ENCODE measurements at regions of chr7 and their contacts with region 1.

Region 1: DNA sequence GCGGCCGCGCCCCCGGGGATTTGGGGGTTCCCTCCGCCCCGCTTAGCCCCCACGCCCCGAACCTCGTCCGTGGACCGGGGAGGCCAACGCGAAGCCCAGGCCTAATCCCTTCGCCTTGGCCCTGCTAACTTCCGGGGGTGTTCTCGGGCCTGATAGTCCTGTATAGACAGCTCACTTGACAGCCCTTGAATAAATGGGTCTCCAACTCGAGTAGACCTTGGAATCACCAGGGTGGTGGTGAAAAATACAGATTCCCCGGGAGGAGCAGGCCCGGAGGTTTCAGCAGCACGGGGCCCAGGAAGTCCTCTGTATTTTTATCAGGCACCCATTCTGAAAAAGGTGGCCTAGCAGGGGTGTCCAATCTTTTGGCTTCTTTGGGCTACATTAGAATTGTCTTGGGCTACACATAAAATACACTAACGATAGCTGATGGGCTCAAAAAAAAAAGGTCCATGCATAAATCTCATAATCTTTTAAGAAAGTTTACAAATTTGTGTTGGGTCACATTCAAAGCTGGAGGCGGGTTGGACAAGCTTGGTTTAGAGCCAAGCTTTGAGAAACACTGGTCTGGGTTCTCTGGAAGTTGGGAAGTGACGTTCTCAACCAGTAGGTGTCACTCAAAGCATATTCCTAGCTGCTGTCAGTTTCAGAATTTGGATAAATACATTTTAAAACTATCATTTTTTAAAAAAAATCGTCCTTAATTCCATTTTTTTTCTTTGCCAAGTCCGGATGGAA is 221.7 kb downstream of the PHTF2 start:
- DNase-seq: peak; percentile 32 to 45 (median 39)
- H3K4me3 ChIP-seq: no peak overlapping the region
- H3K4me3 Mint-ChIP-seq: peak overlapping the region; percentile 78 to 89 (median 82)
- H3K27ac ChIP-seq: no peak overlapping the region
- H3K27ac Mint-ChIP-seq: peak overlapping the region; percentile 32 to 84 (median 68)
- H3K4me1 ChIP-seq: peaks cover 11% of the 10 kb centered on the region
- H3K4me1 Mint-ChIP-seq: peaks cover 4 to 11% (median 8%) of the 10 kb centered on the region in 4 donors
- H3K27me3 ChIP-seq: peaks cover 4% of the 10 kb centered on the region
- H3K27me3 Mint-ChIP-seq: peaks cover 0 to 2% of the 10 kb centered on the region in 2 donors

Region 2: DNA sequence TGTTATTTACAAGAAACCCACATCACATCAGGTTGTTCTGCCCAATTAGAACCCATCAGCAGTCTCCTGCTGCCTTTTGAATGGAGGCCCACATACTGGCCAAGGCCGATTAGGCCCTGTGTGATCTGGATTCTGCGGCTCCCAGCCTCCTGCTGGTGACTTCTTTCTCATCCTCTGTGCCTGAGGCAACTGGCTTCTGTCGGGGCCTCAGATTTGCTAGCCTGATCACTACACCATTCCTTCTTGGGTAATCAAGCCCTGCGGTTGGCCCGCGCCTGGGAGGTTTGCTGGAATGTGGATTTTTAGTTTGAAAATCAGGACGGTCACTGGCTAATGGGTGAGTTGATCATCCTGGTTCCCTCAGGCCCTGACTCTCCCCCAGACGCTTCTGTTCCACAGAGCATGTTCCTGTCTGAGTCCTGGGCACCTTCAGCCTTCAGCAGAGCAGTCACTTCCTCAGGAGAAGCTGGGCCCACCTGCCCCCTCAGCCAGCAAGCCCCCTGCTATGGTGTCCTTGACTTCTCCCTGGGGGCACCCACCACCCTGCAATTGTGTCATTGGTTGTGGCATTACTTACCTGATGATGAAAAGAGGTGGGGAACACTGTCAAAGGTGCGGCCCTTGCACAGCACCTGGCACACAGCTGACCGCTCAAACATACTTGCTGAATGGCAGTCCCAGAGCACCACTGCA is 14.1 kb before region 1 on chr7:
- CTCF ChIA-PET with region 1: interaction called, 14 read pairs
- POLR2A ChIA-PET with region 1: no interaction called
- intact Hi-C with region 1: no loop called
- DNase-seq: no peak
- H3K4me3 ChIP-seq: no peak overlapping the region
- H3K4me3 Mint-ChIP-seq: no peak overlapping the region
- H3K27ac ChIP-seq: no peak overlapping the region
- H3K27ac Mint-ChIP-seq: no peak overlapping the region
- H3K4me1 ChIP-seq: no peaks in the 10 kb centered on the region
- H3K4me1 Mint-ChIP-seq: no peaks in the 10 kb centered on the region
- H3K27me3 ChIP-seq: no peaks in the 10 kb centered on the region
- H3K27me3 Mint-ChIP-seq: peaks cover 0 to 1% of the 10 kb centered on the region in 2 donors

Region 3: GRCh38 chr7:78033410-78033809 is 13.1 kb after region 1 on chr7:
- CTCF ChIA-PET with region 1: interaction called, 102 read pairs
- POLR2A ChIA-PET with region 1: no interaction called
- intact Hi-C with region 1: no loop called
- DNase-seq: no peak
- H3K4me3 ChIP-seq: no peak overlapping the region
- H3K4me3 Mint-ChIP-seq: no peak overlapping the region
- H3K27ac ChIP-seq: no peak overlapping the region
- H3K27ac Mint-ChIP-seq: no peak overlapping the region
- H3K4me1 ChIP-seq: no peaks in the 10 kb centered on the region
- H3K4me1 Mint-ChIP-seq: no peaks in the 10 kb centered on the region
- H3K27me3 ChIP-seq: no peaks in the 10 kb centered on the region
- H3K27me3 Mint-ChIP-seq: peaks cover 19 to 23% of the 10 kb centered on the region in 2 donors

Measured in CD4-positive, alpha-beta memory T cell (primary cell).